ENCODE measurements at regions of chr12 and their contacts with region 1.

Region 1: GRCh38 chr12:117587631-117588287 is 226.3 kb upstream of the NOS1 start:
- DNase-seq: peak; percentile 11
- H3K4me3 Mint-ChIP-seq: no peak overlapping the region
- H3K27ac Mint-ChIP-seq: no peak overlapping the region
- H3K4me1 Mint-ChIP-seq: no peaks in the 10 kb centered on the region
- H3K27me3 Mint-ChIP-seq: peaks cover 4% of the 10 kb centered on the region

Region 2: DNA sequence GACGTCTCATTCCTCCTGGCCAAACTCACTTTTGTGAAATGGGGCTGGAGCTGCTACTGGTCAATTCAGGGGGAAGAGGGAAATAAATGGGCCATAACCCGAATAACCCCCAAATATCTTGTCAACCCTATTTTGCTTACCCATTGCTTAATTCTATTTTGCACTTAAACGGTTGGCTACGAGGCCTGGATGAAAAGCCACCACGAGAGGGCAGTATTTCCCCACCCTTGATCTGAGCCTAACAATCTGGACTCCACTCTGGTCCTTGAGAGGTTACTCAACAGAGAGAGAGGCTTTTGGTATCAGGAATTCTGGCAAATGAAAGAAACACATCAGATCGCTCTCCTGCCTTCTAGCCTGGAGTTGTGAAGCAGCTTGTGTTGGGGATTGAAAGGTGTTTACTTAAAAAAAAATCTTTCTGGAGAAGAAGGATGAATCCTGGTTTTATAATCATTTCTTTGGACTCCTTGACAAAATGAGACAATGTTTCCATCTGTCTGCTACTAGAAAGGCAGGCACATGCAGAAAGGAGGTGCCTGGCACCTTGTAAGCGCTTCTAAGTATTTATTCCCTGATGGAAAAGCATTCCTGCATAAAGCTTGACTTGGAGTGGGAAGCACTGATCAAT is 375.1 kb before region 1 on chr12:
- intact Hi-C with region 1: loop called (anchors 1 kb)
- DNase-seq: peak; percentile 22
- H3K4me3 Mint-ChIP-seq: no peak overlapping the region
- H3K27ac Mint-ChIP-seq: no peak overlapping the region
- H3K4me1 Mint-ChIP-seq: no peaks in the 10 kb centered on the region
- H3K27me3 Mint-ChIP-seq: peaks cover 9% of the 10 kb centered on the region

Region 3: GRCh38 chr12:117236456-117237001 is 351.2 kb before region 1 on chr12:
- intact Hi-C with region 1: loop called (anchors 1 kb)
- DNase-seq: peak; percentile 52
- H3K4me3 Mint-ChIP-seq: no peak overlapping the region
- H3K27ac Mint-ChIP-seq: no peak overlapping the region
- H3K4me1 Mint-ChIP-seq: no peaks in the 10 kb centered on the region
- H3K27me3 Mint-ChIP-seq: peaks cover 3% of the 10 kb centered on the region

Region 4: DNA sequence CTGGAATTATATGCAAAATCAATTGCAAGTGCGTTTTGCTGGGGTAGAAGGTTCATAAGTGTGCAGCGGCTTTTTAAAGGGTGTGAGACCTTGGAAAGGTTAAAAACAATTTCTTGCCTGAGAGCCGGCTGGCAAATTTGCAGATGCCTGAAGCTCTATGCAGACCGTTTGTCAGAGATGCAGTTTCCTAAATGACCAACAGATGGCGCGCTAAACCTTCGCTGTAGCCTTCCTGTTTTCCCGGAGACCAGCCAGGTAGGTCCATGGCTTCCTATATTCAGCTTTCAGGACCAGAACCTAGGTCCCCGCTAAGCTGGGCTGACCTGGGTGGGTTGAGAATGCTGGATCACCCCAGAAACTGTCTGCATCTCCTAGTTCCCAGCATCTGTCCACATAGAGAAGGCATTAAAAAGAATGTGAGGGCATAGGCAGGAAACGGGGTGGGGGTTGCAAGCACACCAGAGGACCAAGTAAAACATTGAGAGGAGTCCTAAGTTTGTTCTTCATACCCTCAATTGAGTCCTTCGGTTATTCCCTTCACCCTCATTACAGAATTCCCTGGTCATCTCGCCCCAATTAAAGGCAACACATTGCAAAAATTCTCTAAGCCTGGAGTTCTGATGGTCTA is 220.6 kb before region 1 on chr12:
- intact Hi-C with region 1: loop called (anchors 1 kb)
- DNase-seq: peak; percentile 27
- H3K4me3 Mint-ChIP-seq: no peak overlapping the region
- H3K27ac Mint-ChIP-seq: no peak overlapping the region
- H3K4me1 Mint-ChIP-seq: no peaks in the 10 kb centered on the region
- H3K27me3 Mint-ChIP-seq: peaks cover 27% of the 10 kb centered on the region